ENCODE measurements at regions of chr9 and their contacts with region 1.

Region 1: DNA sequence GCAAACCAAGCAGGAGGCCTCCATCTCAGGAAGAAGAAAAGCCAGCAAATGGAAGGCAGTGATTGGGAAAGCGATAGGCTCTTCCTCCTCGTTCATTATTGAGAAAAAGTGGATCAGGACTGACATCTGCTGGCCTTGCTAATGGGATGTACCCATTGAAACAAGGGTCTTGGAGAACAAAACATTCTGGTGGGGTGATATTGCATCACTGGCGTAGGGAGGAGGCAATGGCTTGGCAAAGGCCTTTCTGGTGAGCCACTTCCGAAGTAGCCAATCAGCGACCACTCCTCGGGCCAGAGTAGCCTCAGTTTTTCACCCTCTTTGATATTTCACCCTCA is 86.7 kb upstream of the NFIB start:
- DNase-seq: peak; percentile 52
- ATAC-seq: peak; percentile 90

Region 2: GRCh38 chr9:13351778-13352386 is 1048.7 kb before region 1 on chr9:
- intact Hi-C with region 1: loop called (anchors 10 kb)
- DNase-seq: no peak
- ATAC-seq: peak; percentile 64

Region 3: DNA sequence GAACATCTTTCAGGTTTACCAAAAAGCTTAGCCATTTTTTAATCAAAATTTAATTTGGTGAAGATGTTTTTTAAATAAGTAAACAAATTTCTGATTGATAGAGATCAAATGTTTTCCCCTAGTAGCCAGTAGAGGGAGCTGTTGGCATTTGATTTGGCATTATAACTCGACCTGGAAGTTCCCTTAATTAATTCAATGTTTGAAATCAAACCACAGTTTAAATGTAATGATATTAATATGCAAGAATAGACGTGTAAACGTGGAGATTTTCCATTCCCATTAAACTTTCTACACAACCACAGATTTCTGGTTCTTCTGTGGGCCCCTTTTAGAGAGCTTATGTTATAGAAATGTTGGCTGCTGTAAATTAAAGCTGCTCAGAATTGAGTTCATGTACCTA is 973.0 kb before region 1 on chr9:
- intact Hi-C with region 1: loop called (anchors 10 kb)
- DNase-seq: no peak
- ATAC-seq: peak; percentile 70